Endothelial cell of umbilical vein (primary cell): ENCODE measurements at regions of chr16 and their contacts with region 1.

Region 1: GRCh38 chr16:46801428-46802049 is 29.4 kb downstream of the C16orf87 start:
- DNase-seq: peak; percentile 18
- H3K4me3 ChIP-seq: no peak overlapping the region
- H3K27ac ChIP-seq: no peak overlapping the region
- H3K4me1 ChIP-seq: no peaks in the 10 kb centered on the region
- H3K27me3 ChIP-seq: no peaks in the 10 kb centered on the region
- CTCF ChIP-seq: peak; percentile 7 to 31
- POLR2A ChIP-seq: no peak

Region 2: DNA sequence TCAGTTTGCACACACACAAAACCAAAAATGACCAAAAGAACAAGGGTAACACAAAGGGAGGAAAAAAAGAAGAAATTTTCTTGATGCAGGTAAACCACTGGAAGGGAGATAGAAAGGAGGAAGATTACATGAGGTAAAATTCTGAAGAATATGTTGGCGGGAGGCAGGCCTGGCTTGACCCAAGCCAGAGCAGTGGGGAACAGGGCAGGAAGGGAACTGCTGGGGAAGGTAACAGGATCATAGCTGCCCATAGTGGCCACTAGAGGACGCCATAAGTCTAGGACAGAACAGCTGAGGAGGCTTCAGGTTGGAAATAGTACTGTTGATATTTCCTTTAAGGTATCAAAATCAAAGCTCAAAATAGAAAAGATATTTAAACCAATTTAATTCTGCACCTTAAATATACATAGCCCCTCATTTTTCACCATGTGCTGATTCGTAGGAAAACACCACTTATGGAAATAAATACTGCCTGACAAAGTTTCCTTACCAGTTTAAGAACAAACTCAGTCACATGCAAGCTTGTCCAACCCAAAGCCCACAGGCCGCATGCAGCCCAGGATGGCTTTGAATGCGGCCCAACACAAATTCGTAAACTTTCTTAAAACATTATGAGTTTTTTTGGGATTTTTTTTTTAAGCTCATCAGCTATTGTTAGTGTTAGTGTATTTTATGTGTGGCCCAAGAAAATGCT is 128.1 kb before region 1 on chr16:
- CTCF ChIA-PET with region 1: interaction called, 78 read pairs
- POLR2A ChIA-PET with region 1: no interaction called
- dilution Hi-C with region 1: no loop called
- intact Hi-C with region 1: loop called (anchors 1 kb)
- DNase-seq: peak; percentile 62
- H3K4me3 ChIP-seq: no peak overlapping the region
- H3K27ac ChIP-seq: no peak overlapping the region
- H3K4me1 ChIP-seq: no peaks in the 10 kb centered on the region
- H3K27me3 ChIP-seq: no peaks in the 10 kb centered on the region
- CTCF ChIP-seq: peak; percentile 85 to 91
- POLR2A ChIP-seq: no peak

Region 3: DNA sequence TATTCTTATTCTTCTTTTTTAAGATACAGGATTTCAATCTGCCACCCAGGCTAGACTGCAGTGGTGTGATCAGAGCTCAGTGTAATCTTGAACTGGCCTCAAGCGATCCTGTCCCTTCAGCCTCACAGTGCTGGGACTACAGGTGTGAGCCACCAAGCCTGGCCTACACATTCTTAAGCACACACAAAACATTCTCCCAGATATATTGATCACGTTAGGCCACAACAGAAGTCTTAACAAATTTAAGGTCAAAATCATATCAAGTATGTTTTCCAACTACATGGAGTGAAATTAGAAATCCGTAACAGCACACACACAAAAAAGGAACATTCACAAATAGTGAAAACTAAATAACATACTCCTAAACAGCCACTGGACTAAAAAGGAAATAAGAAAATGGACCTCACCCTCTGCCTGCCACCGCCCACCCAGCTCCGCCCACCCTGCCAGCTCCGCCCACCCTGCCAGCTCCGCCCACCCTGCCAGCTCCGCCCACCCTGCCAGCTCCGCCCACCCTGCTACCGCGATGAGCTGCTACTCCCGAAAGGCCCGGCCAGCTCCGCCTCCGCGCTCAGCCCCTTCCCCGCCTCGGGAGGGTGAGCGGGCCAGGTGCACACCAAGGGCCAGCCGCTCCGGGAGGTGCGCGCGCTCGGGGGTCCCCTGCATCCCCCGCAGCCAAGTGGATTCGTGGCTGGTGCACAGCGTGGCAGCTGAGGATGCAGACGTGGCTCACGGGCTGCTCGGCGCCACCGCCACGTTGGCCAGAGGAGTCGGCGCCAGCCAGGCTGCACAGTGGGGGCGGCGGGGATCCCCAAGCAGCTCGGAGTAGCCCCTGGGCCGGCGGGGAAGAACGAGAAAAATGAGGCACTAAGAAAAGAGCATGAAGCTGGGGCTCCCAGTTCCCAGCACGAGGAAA is 11.8 kb before region 1 on chr16:
- CTCF ChIA-PET with region 1: interaction called, 42 read pairs
- POLR2A ChIA-PET with region 1: no interaction called
- dilution Hi-C with region 1: no loop called
- intact Hi-C with region 1: no loop called
- DNase-seq: peak; percentile 80
- H3K4me3 ChIP-seq: peak overlapping the region; percentile 17 to 58 (median 51)
- H3K27ac ChIP-seq: peak overlapping the region; percentile 0
- H3K4me1 ChIP-seq: peaks cover 2% of the 10 kb centered on the region
- H3K27me3 ChIP-seq: peaks cover 7 to 10% of the 10 kb centered on the region in 2 experiments
- CTCF ChIP-seq: no peak
- POLR2A ChIP-seq: peak; percentile 68

Region 4: DNA sequence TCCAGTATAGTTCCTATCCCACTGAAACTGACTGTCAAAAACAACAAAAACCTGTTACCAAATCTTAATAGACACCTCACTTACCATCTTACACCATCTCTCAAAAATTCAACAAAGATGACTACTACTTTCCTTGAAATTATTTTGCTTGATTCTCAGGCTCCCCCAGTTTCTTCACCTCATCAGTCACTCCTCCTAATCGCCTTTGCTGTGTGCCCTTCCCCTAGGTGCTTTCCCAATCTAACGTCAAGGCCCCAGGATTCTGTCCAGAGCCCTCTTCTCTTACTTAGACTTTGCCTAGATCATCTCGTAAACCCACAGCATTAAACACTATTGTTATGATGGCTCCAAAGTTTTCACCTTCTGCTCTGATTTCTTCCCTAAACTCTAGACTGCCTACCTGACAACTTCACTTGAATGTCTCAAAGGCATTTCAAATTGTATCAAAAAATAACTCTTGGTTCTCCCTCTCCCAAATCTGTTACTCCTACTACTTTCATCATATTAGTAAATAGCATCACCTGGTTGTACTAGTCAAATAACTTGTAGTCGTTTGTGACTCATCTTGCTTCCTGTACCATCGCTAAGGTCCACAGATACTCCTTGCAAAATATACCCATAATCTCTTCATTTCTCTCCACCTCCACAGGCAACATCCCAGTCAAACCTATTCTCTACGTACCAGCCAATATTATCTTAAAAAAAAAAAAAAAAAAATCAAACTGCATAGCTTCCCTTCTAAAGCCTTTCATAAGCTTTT is 11.4 kb after region 1 on chr16:
- CTCF ChIA-PET with region 1: interaction called, 22 read pairs
- POLR2A ChIA-PET with region 1: no interaction called
- dilution Hi-C with region 1: no loop called
- intact Hi-C with region 1: no loop called
- DNase-seq: no peak
- H3K4me3 ChIP-seq: no peak overlapping the region
- H3K27ac ChIP-seq: no peak overlapping the region
- H3K4me1 ChIP-seq: peaks cover 12% of the 10 kb centered on the region
- H3K27me3 ChIP-seq: no peaks in the 10 kb centered on the region
- CTCF ChIP-seq: no peak
- POLR2A ChIP-seq: no peak

Region 5: GRCh38 chr16:46830902-46831647 is 29.5 kb after region 1 on chr16 and contains the start of gene C16orf87:
- CTCF ChIA-PET with region 1: interaction called, 20 read pairs
- POLR2A ChIA-PET with region 1: no interaction called
- dilution Hi-C with region 1: no loop called
- intact Hi-C with region 1: no loop called
- DNase-seq: peak; percentile 93
- H3K4me3 ChIP-seq: peak within 1 kb of the TSS; percentile 74 to 91 (median 82)
- H3K27ac ChIP-seq: peak within 1 kb of the TSS; percentile 50
- H3K4me1 ChIP-seq: peaks cover 24% of the 10 kb centered on the region
- H3K27me3 ChIP-seq: peaks cover 8 to 13% of the 10 kb centered on the region in 2 experiments
- CTCF ChIP-seq: no peak
- POLR2A ChIP-seq: peak; percentile 43
- total RNA-seq, gene C16orf87: 8.5 and 11.1 TPM in 2 replicates